WTC11 (cell line): ENCODE measurements at regions of chr17 and their contacts with region 1.

Region 1: DNA sequence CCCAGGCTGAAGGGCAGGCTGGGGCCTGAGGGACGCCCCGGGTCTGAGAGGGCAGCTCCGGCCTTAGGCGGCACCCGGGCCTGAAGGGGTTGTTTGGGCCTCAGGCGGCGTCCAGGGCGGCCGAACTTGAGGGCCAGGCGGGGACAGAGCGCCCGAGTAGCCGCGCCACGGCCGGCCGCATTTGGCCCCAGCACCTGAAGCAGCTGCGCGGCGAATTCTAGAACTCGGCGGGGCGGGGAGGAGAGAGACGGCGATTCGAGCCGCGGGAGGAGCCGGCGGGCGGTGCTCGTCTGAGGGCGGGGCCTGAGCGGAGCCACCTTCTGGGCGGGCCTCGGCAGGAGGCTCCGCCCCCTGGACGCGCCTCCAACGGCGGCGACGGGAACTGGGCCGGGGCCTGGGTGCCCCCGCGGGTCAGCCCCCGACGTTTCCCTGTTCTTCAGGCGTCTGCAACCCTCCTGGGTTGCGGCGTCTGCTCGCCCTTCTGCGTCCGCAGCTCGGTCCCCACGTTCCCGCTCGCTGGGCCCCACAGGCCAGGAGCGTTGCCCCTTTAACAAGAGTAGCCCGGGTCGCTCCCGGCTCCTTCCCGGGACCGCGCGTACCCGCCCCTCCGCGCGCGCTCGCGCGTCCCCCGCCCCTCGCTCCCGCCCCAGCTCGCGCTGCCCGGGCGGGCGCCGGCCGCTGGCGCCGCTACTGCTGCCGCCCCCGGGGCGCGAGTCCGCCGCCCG is at the starts of genes INCA1 and KIF1C:
- DNase-seq: peak; percentile 94
- ATAC-seq: peak; percentile 85
- H3K4me3 Mint-ChIP-seq: peak within 1 kb of the TSS; percentile 87
- H3K27ac Mint-ChIP-seq: peak within 1 kb of the TSS; percentile 57; the same call in 1 of the 2 replicates
- H3K4me1 Mint-ChIP-seq: peaks cover 16% of the 10 kb centered on the region
- H3K27me3 Mint-ChIP-seq: peaks cover 28% of the 10 kb centered on the region
- CTCF ChIP-seq: no peak
- total RNA-seq, gene INCA1: 0.61 to 1.1 TPM (median 1.1 TPM) in 3 replicates
- total RNA-seq, gene KIF1C: 112 to 130 TPM (median 115 TPM) in 3 replicates

Region 2: DNA sequence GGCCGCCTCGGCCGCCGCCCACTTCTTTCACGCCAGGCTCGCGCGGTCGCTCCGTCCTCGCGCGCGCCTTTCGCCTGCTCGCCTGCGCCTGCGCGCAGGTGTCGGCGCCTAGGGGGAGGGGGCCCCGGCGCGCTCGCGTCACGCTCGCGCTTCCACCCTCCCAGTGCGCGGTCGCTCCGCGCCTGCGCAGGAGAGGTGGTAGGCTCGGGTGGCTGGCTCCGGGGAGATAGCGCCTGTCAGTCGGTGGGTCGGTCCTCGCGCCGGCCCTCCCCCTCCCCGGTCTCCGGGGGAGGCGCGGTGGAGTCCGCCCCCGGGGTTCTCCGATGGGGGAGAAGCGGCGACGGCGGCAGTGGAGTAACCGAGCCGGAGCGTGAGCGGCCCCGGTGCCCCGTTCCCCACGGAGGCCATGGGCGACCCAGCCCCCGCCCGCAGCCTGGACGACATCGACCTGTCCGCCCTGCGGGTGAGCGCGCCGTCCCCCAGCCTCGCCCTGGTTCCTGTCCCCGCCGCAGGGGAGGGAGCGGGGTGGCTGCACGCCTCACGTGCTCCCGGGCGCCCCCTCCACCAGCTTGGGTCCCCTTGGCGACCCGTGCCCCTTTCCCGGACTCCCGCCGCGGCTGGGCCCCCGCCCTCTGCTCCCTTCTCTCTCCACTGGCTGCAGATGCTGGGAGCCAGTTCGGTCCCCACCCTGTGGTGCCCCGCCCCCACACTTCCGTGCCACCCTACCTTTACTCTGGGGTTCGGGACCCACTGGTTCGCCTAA is 164.1 kb before region 1 on chr17 and contains the start of gene MINK1:
- CTCF ChIA-PET with region 1: no interaction called
- POLR2A ChIA-PET with region 1: no interaction called
- DNase-seq: peak; percentile 79
- ATAC-seq: peak; percentile 88
- H3K4me3 Mint-ChIP-seq: peak within 1 kb of the TSS; percentile 86
- H3K27ac Mint-ChIP-seq: peak within 1 kb of the TSS; percentile 96
- H3K4me1 Mint-ChIP-seq: peaks cover 26% of the 10 kb centered on the region
- H3K27me3 Mint-ChIP-seq: no peaks in the 10 kb centered on the region; the same call in 1 of the 2 replicates
- CTCF ChIP-seq: no peak
- total RNA-seq, gene MINK1: 92.1 to 105 TPM (median 96.2 TPM) in 3 replicates

Region 3: GRCh38 chr17:5035315-5035714 is 37.9 kb after region 1 on chr17 and contains the start of gene SLC52A1:
- CTCF ChIA-PET with region 1: no interaction called
- POLR2A ChIA-PET with region 1: no interaction called
- DNase-seq: peak; percentile 57
- ATAC-seq: peak; percentile 68
- H3K4me3 Mint-ChIP-seq: peak within 1 kb of the TSS; percentile 55
- H3K27ac Mint-ChIP-seq: no peak within 1 kb of the TSS
- H3K4me1 Mint-ChIP-seq: no peaks in the 10 kb centered on the region
- H3K27me3 Mint-ChIP-seq: peaks cover 26% of the 10 kb centered on the region
- CTCF ChIP-seq: no peak
- total RNA-seq, gene SLC52A1: 0.78 to 1.1 TPM (median 0.99 TPM) in 3 replicates

Region 4: DNA sequence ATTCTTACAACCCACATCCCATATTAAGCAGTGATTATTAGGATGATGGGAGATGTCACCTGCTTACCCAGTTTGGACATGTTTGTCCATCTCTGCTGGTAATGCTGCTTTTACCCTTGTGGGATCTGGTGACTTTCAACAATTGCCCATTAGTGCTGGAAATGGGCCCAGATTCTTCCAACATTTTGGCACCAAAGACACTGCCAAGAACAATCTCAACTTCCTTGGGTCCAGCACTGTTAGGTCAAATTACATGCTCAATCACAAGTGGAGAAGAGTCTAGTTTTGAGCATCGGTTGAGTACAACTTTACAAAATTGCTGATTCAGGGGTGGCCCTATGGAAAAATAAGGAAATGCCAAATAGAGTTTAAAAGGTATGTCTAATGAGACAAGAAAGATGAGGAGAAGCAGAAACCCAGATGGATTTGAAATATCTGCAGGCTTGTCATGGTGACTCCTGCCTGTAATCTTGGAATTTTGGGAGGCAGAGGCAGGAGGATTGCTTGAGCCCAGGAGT is 67.8 kb after region 1 on chr17:
- CTCF ChIA-PET with region 1: interaction called, 17 read pairs
- POLR2A ChIA-PET with region 1: no interaction called
- DNase-seq: no peak
- ATAC-seq: no peak
- H3K4me3 Mint-ChIP-seq: no peak overlapping the region
- H3K27ac Mint-ChIP-seq: no peak overlapping the region
- H3K4me1 Mint-ChIP-seq: no peaks in the 10 kb centered on the region
- H3K27me3 Mint-ChIP-seq: peaks cover 12% of the 10 kb centered on the region
- CTCF ChIP-seq: no peak